ENCODE measurements at regions of chr3 and their contacts with region 1.

Region 1: GRCh38 chr3:71360764-71361163 is 222.8 kb downstream of the FOXP1 start:
- DNase-seq: peak in 4 of 9 donors; percentile 29 to 55 (median 40)
- ATAC-seq: peak; percentile 69
- H3K4me3 ChIP-seq: peak overlapping the region; percentile 1
- H3K4me3 Mint-ChIP-seq: peak overlapping the region; percentile 14 to 84 (median 76)
- H3K27ac ChIP-seq: peak overlapping the region; percentile 66
- H3K27ac Mint-ChIP-seq: peak overlapping the region; percentile 52 to 97 (median 90)
- H3K4me1 ChIP-seq: peaks cover 14 to 79% of the 10 kb centered on the region in 2 donors
- H3K4me1 Mint-ChIP-seq: peaks cover 25 to 97% (median 93%) of the 10 kb centered on the region in 7 donors
- H3K27me3 ChIP-seq: no peaks in the 10 kb centered on the region
- H3K27me3 Mint-ChIP-seq: peaks cover 0 to 16% (median 0%) of the 10 kb centered on the region in 5 donors

Region 2: GRCh38 chr3:71142440-71143161 is 218.2 kb before region 1 on chr3:
- CTCF ChIA-PET with region 1: no interaction called
- POLR2A ChIA-PET with region 1: no interaction called
- intact Hi-C with region 1: no loop called
- DNase-seq: peak in 3 of 9 donors; percentile 21 to 38 (median 31)
- ATAC-seq: peak; percentile 55
- H3K4me3 ChIP-seq: no peak overlapping the region
- H3K4me3 Mint-ChIP-seq: peak overlapping the region in 4 of 10 donors; percentile 5 to 50 (median 21)
- H3K27ac ChIP-seq: peak overlapping the region; percentile 10
- H3K27ac Mint-ChIP-seq: peak overlapping the region in 8 of 9 donors; percentile 75 to 94 (median 80)
- H3K4me1 ChIP-seq: peaks cover 0 to 10% of the 10 kb centered on the region in 2 donors
- H3K4me1 Mint-ChIP-seq: peaks cover 6 to 92% (median 83%) of the 10 kb centered on the region in 7 donors
- H3K27me3 ChIP-seq: no peaks in the 10 kb centered on the region
- H3K27me3 Mint-ChIP-seq: no peaks in the 10 kb centered on the region

Region 3: GRCh38 chr3:71345429-71346040 is 15.2 kb before region 1 on chr3:
- CTCF ChIA-PET with region 1: no interaction called
- POLR2A ChIA-PET with region 1: no interaction called
- intact Hi-C with region 1: loop called in 1 of 2 experiments (anchors 1 kb)
- DNase-seq: no peak
- ATAC-seq: no peak
- H3K4me3 ChIP-seq: no peak overlapping the region
- H3K4me3 Mint-ChIP-seq: peak overlapping the region in 6 of 10 donors; percentile 7 to 57 (median 48)
- H3K27ac ChIP-seq: no peak overlapping the region
- H3K27ac Mint-ChIP-seq: peak overlapping the region in 8 of 9 donors; percentile 65 to 92 (median 79)
- H3K4me1 ChIP-seq: peaks cover 7 to 25% of the 10 kb centered on the region in 2 donors
- H3K4me1 Mint-ChIP-seq: peaks cover 9 to 87% (median 64%) of the 10 kb centered on the region in 7 donors
- H3K27me3 ChIP-seq: no peaks in the 10 kb centered on the region
- H3K27me3 Mint-ChIP-seq: peaks cover 0 to 11% (median 0%) of the 10 kb centered on the region in 5 donors